Astrocyte of the cerebellum (primary cell): ENCODE measurements at regions of chr5 and their contacts with region 1.

Region 1: DNA sequence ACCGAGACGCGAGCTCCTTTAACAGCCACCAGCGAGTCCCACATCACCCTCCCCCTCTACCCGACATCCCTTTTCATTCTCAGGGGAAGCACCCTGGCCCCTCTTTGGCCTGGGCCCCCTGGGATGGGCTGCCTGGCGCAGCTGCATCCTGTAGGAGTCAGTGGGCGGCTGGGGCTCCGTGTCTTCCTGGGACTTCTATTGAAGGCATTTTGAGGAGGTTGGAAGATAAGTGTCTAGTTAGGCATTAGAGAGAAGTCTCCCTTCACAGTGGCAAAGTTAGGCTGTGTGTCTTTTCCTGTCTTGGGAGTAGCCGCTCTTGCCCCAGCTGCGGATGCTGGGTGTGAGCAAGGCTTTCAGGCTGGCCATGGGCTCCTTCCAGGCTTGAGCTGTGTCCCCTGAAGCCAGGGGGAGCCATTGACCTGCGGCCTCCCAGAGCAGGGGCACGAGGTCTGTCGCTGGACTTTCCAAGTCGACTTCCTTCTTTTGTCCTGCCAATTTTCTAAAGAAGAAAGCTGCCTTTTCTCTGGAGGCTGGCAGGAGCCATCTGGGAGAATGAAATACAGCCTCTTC is 18.6 kb upstream of the NKD2 start:
- DNase-seq: no peak
- H3K4me3 ChIP-seq: no peak overlapping the region
- CTCF ChIP-seq: no peak

Region 2: DNA sequence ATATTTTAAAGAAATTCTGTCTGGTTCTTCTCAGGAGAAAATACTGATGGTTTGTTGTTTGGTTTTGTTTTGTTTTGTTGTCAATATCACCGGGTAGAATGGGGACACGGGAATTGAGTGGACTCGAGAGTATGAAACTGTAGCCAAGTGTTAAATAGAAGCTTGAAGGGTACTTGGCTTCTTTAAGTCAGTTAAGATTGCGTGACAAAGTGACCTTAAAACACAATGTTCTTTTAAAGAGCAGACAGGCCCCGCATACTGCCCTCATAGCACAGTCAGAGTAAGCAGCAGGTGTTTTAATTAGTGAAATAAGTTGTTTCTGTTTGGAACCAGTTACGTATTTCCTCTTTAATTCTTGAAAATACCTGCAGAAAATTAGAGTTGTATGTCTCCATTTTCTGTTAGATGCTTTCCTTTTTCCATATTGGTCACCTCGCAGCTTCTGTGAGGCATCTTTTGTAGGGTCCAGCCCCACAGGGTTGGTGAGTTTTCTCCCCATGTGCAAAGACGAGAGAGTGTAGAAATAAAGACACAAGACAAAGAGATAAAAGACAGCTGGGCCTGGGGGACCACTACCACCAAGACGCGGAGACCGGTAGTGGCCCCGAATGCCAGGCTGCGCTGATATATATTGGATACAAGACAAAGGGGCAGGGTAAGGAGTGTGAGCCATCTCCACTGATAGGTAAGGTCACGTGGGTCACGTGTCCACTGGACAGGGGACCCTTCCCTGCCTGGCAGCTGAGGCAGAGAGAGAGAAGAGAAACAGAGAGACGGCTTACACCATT is 87.7 kb before region 1 on chr5:
- in situ Hi-C with region 1: no loop called
- DNase-seq: no peak
- H3K4me3 ChIP-seq: no peak overlapping the region
- CTCF ChIP-seq: no peak

Region 3: GRCh38 chr5:943918-944620 is 46.0 kb before region 1 on chr5:
- in situ Hi-C with region 1: no loop called
- DNase-seq: no peak
- H3K4me3 ChIP-seq: no peak overlapping the region
- CTCF ChIP-seq: no peak

Region 4: DNA sequence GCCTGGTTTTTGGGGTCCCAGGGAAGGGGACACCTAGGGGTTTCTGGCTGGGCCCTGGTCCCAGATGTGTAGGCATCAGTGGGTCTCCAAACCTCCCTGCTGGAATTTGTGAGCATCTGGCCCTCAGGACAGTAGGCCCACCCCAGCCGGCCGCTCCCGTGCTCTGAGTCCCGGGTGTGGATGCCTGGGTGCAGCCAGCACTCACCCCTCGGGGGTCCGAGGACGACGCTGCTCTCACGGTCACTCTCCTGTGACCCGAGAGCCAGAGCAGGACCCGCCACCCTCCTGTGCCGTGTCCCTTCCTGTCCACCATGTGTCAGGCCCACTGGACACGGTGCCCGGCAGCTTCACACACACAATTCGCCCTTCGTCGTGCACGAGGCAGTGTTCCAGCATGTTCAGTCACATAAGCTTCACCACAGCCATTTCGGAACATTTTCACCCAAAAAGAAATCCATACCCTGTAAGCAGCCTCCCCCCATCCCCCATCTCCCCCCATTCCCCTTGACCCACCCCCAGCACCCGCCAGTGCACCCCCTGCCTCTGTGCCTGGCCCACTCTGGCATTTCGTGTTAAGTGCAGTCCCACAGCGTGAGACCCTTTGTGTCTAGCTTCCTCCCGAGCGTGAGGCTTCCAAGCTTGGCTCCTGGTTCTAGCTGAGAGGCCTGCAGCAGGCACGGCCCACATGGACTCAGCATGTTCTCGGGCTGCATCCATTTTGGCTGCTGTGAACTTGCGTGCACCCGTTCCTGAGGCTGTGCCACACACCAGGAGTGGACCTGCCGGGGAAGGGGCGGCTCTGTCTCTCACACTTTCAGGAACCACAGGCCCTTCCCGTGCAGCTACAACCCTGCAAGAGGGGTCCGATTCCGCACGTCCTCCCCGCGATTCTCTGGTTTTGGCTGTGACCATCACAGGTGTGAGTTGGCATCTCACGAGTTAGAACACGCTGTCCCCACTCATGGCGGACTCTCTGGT is 59.1 kb after region 1 on chr5:
- in situ Hi-C with region 1: loop called (anchors 10 kb)
- DNase-seq: no peak
- H3K4me3 ChIP-seq: no peak overlapping the region
- CTCF ChIP-seq: no peak